PC-9 (cell line): ENCODE measurements at regions of chr6 and their contacts with region 1.

Region 1: GRCh38 chr6:8102122-8102958 is at the start of gene EEF1E1:
- DNase-seq: peak; percentile 85 to 92
- H3K4me3 ChIP-seq: peak within 1 kb of the TSS; percentile 83
- H3K27ac ChIP-seq: peak within 1 kb of the TSS; percentile 76
- H3K4me1 ChIP-seq: peaks cover 22% of the 10 kb centered on the region
- H3K27me3 ChIP-seq: no peaks in the 10 kb centered on the region
- CTCF ChIP-seq: no peak
- total RNA-seq, gene EEF1E1: 28.6 and 50.9 TPM in 2 replicates

Region 2: DNA sequence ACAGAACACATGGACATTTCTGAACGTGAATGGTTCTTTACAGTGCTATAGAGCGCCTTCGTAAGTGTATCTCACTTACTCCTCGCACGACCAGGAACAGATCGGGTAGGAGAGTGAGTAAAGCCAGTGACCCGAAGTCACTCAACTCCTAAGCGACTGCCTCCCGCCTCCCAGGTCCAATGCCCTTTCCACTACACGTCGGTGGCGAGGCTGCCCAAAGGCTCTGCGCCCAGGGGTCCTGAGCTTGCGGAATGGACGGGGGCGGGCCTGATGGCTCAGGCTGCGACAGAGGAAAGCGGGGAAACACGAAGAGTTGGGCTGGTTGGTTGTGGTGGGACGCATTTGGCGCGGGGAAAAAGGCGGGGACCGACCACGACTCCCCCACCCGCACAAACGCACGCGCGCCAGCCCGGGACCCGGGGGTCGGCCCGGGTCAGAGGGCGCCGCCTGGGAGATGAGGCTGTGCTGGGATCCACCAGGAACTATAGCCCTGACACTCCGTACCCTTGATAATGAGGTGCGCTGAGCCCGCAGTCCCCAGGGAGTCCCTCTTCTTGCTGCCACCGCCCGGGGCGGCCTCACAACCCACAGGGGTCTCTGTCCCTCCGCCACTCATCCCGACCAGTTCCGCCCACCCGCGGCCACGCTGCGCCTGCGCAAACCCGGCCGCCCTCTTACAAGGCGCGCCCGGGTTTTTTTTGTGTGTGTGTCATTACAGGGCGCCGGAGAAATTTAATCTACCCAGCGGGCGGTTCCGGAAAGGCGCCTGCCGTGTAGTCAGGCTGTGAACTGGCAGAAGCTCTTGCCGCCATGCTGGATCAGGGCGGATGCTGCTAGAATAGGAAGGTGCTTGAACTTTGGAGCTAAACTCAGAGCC is 38.3 kb before region 1 on chr6 and contains the start of gene BLOC1S5:
- CTCF ChIA-PET with region 1: interaction called, 3 read pairs
- POLR2A ChIA-PET with region 1: interaction called, 6 read pairs
- intact Hi-C with region 1: loop called (anchors 2 kb)
- DNase-seq: peak; percentile 84 to 95
- H3K4me3 ChIP-seq: peak within 1 kb of the TSS; percentile 83
- H3K27ac ChIP-seq: peak within 1 kb of the TSS; percentile 36
- H3K4me1 ChIP-seq: 0 out of 2 replicates have a peak, but pooled peaks cover 4% of the 10 kb centered on the region
- H3K27me3 ChIP-seq: no peaks in the 10 kb centered on the region
- CTCF ChIP-seq: no peak
- total RNA-seq, gene BLOC1S5: 12.5 and 16.1 TPM in 2 replicates

Region 3: DNA sequence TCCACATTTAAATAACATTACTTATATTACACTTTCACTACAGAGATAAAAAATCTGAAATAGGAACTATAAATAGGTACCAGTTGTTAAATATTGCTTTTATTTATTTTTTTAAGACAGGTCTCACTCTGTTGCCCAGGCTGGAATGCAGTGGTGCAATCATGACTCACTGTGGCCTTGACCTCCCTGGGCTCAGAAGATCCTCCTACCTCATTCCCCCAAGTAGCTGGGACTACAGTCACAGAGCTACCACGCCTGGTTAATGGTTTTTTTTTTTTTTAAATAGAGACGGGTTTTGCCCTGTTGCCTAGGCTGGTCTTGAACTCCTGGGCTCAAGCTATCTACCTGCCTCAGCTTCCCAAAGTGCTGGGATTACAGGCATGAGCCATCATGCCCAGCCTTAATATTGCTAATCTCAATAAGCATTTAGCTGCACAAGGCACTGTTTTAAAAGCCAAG is 17.3 kb before region 1 on chr6:
- CTCF ChIA-PET with region 1: interaction called, 10 read pairs
- POLR2A ChIA-PET with region 1: interaction called, 10 read pairs
- intact Hi-C with region 1: loop called (anchors 1 kb)
- DNase-seq: peak; percentile 81 to 87
- H3K4me3 ChIP-seq: no peak overlapping the region
- H3K27ac ChIP-seq: peak overlapping the region; percentile 72
- H3K4me1 ChIP-seq: peaks cover 58% of the 10 kb centered on the region
- H3K27me3 ChIP-seq: no peaks in the 10 kb centered on the region
- CTCF ChIP-seq: no peak

Region 4: GRCh38 chr6:8157839-8158238 is 55.5 kb after region 1 on chr6:
- CTCF ChIA-PET with region 1: no interaction called
- POLR2A ChIA-PET with region 1: interaction called, 15 read pairs
- intact Hi-C with region 1: no loop called
- DNase-seq: peak; percentile 41 to 80
- H3K4me3 ChIP-seq: no peak overlapping the region
- H3K27ac ChIP-seq: peak overlapping the region; percentile 22; the same call in 1 of the 2 replicates
- H3K4me1 ChIP-seq: 0 out of 2 replicates have a peak, but pooled peaks cover 4% of the 10 kb centered on the region
- H3K27me3 ChIP-seq: no peaks in the 10 kb centered on the region
- CTCF ChIP-seq: no peak